ENCODE measurements at regions of chr11 and their contacts with region 1.

Region 1: DNA sequence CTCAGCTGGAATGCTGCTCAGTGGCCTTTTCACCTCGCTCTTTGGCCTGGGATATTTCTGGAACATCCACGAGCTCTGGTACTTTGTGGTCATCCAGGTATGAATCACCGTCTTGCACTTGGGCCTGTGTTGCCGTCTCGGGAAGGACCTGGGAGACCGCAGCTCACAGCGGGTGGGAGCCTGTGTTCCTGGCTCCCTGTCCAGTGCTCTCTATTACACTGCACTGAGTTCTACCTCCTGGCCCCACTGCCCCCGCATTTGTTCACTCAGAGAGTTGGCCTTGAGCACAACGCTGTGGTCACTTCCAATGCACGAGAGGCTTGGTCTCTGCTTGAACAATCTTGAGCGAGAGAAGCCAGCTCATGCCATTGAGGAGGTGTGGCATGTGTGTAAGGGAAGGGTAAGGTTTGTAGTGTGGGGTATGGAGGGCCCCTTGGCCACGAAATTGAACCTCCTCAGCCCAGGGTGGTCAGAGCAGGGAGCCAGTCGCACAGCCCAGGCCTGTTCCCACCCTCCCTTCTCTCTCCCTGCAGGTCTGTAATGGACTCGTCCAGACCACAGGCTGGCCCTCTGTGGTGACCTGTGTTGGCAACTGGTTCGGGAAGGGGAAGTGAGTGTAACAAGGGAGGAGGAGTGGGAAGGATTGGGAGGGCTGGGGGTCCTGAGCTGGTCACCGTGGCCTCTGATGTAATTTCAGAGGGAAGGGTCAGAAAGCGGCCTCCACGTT is 16.2 kb downstream of the SLC37A2 start:
- DNase-seq: no peak
- H3K4me3 Mint-ChIP-seq: no peak overlapping the region
- H3K27ac Mint-ChIP-seq: no peak overlapping the region
- H3K4me1 Mint-ChIP-seq: no peaks in the 10 kb centered on the region
- H3K27me3 Mint-ChIP-seq: no peaks in the 10 kb centered on the region

Region 2: GRCh38 chr11:125091247-125091876 is 12.0 kb after region 1 on chr11:
- CTCF ChIA-PET with region 1: interaction called, 14 read pairs
- POLR2A ChIA-PET with region 1: no interaction called
- DNase-seq: no peak
- H3K4me3 Mint-ChIP-seq: no peak overlapping the region
- H3K27ac Mint-ChIP-seq: no peak overlapping the region
- H3K4me1 Mint-ChIP-seq: no peaks in the 10 kb centered on the region
- H3K27me3 Mint-ChIP-seq: no peaks in the 10 kb centered on the region